Right ventricle myocardium inferior (tissue), 1 donor: ENCODE measurements at regions of chr12 and their contacts with region 1.

Region 1: DNA sequence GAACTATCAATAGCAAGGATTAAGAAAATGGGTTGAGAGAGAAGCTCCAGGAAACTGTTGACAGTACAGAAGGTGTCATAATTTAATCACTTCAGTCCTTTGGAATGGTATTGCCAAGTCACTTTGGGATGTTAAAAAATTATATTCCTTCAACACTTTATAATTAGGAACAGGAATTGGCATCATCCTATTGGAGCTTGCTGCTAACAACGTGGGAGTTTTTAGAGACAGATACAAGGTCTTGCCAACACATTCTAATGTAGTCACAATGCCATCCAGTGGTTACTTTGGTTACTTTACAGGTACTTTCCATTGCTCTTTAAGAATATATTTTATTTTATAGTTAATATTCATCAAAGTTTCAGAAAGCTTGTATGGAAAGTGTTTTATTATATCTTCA is 310.1 kb downstream of the SYT1 start:
- DNase-seq: no peak
- ATAC-seq: peak; percentile 57

Region 2: GRCh38 chr12:78002878-78003277 is 1171.7 kb before region 1 on chr12:
- intact Hi-C with region 1: loop called (anchors 10 kb)
- DNase-seq: no peak
- ATAC-seq: no peak